Activated T-helper 2 cell treated with anti-CD3 and anti-CD28 coated beads, Interferon-gamma antibody, Interleukin-2, Interleukin-4, amounts not matched to agents 10 μg/mL and 5 μg/mL and 100 μg/mL, durations not matched to agents 14 hours and 24 hours and 36 hours (primary cell): ENCODE measurements at regions of chr2 and their contacts with region 1.

Region 1: GRCh38 chr2:152505495-152505906 is 170.5 kb downstream of the FMNL2 start:
- DNase-seq: no peak
- H3K4me3 Mint-ChIP-seq: no peak overlapping the region
- H3K27ac Mint-ChIP-seq: no peak overlapping the region
- H3K4me1 Mint-ChIP-seq: peaks cover 27% of the 10 kb centered on the region
- H3K27me3 Mint-ChIP-seq: no peaks in the 10 kb centered on the region

Region 2: GRCh38 chr2:152189622-152190495 is 315.6 kb before region 1 on chr2:
- intact Hi-C with region 1: loop called (anchors 5 kb)
- DNase-seq: no peak
- H3K4me3 Mint-ChIP-seq: no peak overlapping the region
- H3K27ac Mint-ChIP-seq: no peak overlapping the region
- H3K4me1 Mint-ChIP-seq: peaks cover 6% of the 10 kb centered on the region
- H3K27me3 Mint-ChIP-seq: peaks cover 15% of the 10 kb centered on the region

Region 3: DNA sequence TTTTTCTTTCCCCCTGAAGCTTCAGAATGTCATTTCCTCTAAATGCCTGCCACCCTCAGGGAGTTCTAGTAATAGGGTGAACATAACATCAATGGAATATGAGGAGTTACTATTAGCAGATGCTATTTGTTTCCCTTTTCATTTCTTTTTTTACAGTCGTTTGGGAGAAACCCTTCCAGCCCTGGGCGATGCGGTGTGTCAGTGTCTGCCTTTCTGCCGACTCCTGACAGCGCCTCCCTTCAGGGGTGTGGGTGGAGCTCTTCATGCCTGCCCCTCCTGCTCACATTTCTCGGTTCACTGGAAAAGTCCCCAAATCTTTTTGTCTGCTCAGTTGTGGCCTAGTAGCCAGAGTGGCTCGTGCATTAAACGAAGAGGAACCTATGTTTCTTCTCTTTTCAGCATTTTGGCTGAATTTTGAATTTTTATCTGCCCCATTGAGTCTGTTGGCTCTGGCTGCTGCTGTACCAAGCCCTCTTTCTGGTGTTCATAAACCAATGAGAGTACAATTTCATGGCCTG is 98.2 kb before region 1 on chr2:
- intact Hi-C with region 1: loop called (anchors 2 kb)
- DNase-seq: no peak
- H3K4me3 Mint-ChIP-seq: peak overlapping the region; percentile 67
- H3K27ac Mint-ChIP-seq: peak overlapping the region; percentile 84
- H3K4me1 Mint-ChIP-seq: peaks cover 74% of the 10 kb centered on the region
- H3K27me3 Mint-ChIP-seq: no peaks in the 10 kb centered on the region

Region 4: GRCh38 chr2:152415231-152415642 is 90.3 kb before region 1 on chr2:
- intact Hi-C with region 1: loop called (anchors 2 kb)
- DNase-seq: no peak
- H3K4me3 Mint-ChIP-seq: peak overlapping the region; percentile 8
- H3K27ac Mint-ChIP-seq: peak overlapping the region; percentile 88
- H3K4me1 Mint-ChIP-seq: peaks cover 53% of the 10 kb centered on the region
- H3K27me3 Mint-ChIP-seq: peaks cover 2% of the 10 kb centered on the region

Region 5: DNA sequence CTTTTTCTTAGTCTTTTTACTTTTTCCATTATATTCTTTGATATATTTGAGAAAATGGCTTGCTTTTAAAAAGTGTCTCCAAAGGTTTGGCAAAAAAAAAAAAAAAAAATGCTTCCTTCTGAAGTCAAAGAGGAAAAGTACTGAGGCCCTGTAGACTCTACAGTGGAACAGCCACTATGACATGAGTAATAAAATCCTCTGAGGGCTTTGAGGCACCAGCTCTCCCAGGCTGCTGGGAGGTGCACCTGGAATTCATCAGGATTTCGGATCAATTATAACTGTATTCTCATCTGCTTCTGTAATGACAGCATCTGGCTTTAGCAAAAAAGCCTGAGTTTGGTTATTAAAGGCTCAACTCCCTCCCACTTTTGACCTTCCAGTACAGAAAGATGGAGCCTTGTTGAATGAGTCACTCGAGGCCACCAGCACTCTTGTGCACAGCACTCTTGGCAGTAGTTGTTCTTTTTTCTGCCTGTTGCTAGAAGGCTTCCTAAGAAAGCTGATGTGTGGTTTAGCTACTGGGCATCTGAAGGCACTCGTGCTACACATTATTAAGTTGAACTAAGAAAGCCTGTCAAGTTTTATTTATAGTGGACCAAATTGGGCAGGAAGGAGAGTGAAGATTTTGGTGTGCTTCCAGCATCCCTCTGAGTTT is 80.5 kb after region 1 on chr2:
- intact Hi-C with region 1: loop called (anchors 5 kb)
- DNase-seq: no peak
- H3K4me3 Mint-ChIP-seq: no peak overlapping the region
- H3K27ac Mint-ChIP-seq: no peak overlapping the region
- H3K4me1 Mint-ChIP-seq: peaks cover 25% of the 10 kb centered on the region
- H3K27me3 Mint-ChIP-seq: peaks cover 2% of the 10 kb centered on the region